ENCODE measurements at regions of chr3 and their contacts with region 1.

Region 1: GRCh38 chr3:69671082-69671952 is 67.9 kb upstream of the MITF start:
- DNase-seq: no peak
- H3K4me3 ChIP-seq: no peak overlapping the region
- H3K27ac ChIP-seq: no peak overlapping the region
- H3K4me1 ChIP-seq: no peaks in the 10 kb centered on the region
- H3K27me3 ChIP-seq: no peaks in the 10 kb centered on the region
- CTCF ChIP-seq: peak; percentile 61 to 74 (median 72)
- EP300 ChIP-seq: no peak
- POLR2A ChIP-seq: no peak

Region 2: GRCh38 chr3:69306239-69307185 is 364.8 kb before region 1 on chr3:
- in situ Hi-C with region 1: loop called in 3 of 4 experiments (anchors 25 kb)
- intact Hi-C with region 1: no loop called
- DNase-seq: peak; percentile 72
- H3K4me3 ChIP-seq: no peak overlapping the region
- H3K27ac ChIP-seq: peak overlapping the region in 2 of 4 donors; percentile 44 to 51
- H3K4me1 ChIP-seq: peaks cover 0 to 13% (median 0%) of the 10 kb centered on the region in 4 donors
- H3K27me3 ChIP-seq: no peaks in the 10 kb centered on the region
- CTCF ChIP-seq: peak; percentile 85 to 93 (median 87)
- EP300 ChIP-seq: no peak
- POLR2A ChIP-seq: no peak

Region 3: DNA sequence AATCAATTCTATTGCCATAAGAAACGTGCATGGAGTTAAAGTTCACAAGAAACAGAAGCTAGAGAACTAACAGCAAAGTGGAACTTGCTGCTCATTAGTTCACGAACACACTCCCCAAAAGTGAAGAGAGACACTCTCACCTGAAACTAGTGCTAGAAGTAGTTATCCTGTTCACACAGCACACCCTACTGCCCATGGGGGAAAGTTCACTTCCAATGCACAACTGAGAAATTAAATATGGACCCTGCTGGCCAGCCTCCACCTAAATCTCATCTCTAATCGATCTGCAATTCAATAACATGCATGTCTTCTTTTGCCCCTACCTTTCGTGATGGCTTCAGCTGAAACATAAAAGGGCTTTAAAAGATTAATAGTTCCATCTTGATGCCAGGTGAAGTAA is 246.1 kb before region 1 on chr3:
- in situ Hi-C with region 1: loop called in 3 of 4 experiments (anchors 25 kb)
- intact Hi-C with region 1: no loop called
- DNase-seq: peak; percentile 22
- H3K4me3 ChIP-seq: no peak overlapping the region
- H3K27ac ChIP-seq: no peak overlapping the region
- H3K4me1 ChIP-seq: no peaks in the 10 kb centered on the region
- H3K27me3 ChIP-seq: no peaks in the 10 kb centered on the region
- CTCF ChIP-seq: peak; percentile 27 to 60 (median 44)
- EP300 ChIP-seq: no peak
- POLR2A ChIP-seq: no peak

Measured in transverse colon (tissue), 4 donors.